GM12878 (cell line): ENCODE measurements at regions of chr9 and their contacts with region 1.

Region 1: GRCh38 chr9:38671748-38672147 is 48.2 kb downstream of the FAM240B start:
- DNase-seq: peak; percentile 50
- ATAC-seq: peak; percentile 78
- H3K4me3 ChIP-seq: no peak overlapping the region
- H3K27ac ChIP-seq: no peak overlapping the region
- H3K4me1 ChIP-seq: peaks cover 8% of the 10 kb centered on the region
- H3K27me3 ChIP-seq: no peaks in the 10 kb centered on the region
- CTCF ChIP-seq: no peak
- EP300 ChIP-seq: 0 out of 4 replicates have a peak, but pooled peaks of 1 of the 2 experiments have one; percentile 16
- POLR2A ChIP-seq: no peak
- RAD21 ChIP-seq: no peak

Region 2: GRCh38 chr9:37880916-37881479 is 790.8 kb before region 1 on chr9:
- CTCF ChIA-PET with region 1: no interaction called
- POLR2A ChIA-PET with region 1: no interaction called
- RAD21 ChIA-PET with region 1: no interaction called
- SMC1A ChIA-PET with region 1: no interaction called
- in situ Hi-C with region 1: no loop called
- intact Hi-C with region 1: no loop called
- DNase-seq: no peak
- ATAC-seq: no peak
- H3K4me3 ChIP-seq: no peak overlapping the region
- H3K27ac ChIP-seq: no peak overlapping the region
- H3K4me1 ChIP-seq: no peaks in the 10 kb centered on the region
- H3K27me3 ChIP-seq: no peaks in the 10 kb centered on the region
- CTCF ChIP-seq: no peak
- EP300 ChIP-seq: no peak
- POLR2A ChIP-seq: no peak
- RAD21 ChIP-seq: no peak

Region 3: GRCh38 chr9:38277601-38278200 is 394.0 kb before region 1 on chr9:
- CTCF ChIA-PET with region 1: no interaction called
- POLR2A ChIA-PET with region 1: no interaction called
- RAD21 ChIA-PET with region 1: no interaction called
- SMC1A ChIA-PET with region 1: no interaction called
- in situ Hi-C with region 1: no loop called
- intact Hi-C with region 1: no loop called
- DNase-seq: no peak
- ATAC-seq: no peak; the same call in 2 of the 3 replicates
- H3K4me3 ChIP-seq: no peak overlapping the region
- H3K27ac ChIP-seq: no peak overlapping the region
- H3K4me1 ChIP-seq: no peaks in the 10 kb centered on the region
- H3K27me3 ChIP-seq: peaks cover 0 to 3% of the 10 kb centered on the region in 2 experiments; a peak in 2 of 4 replicates
- CTCF ChIP-seq: no peak
- EP300 ChIP-seq: no peak
- POLR2A ChIP-seq: no peak
- RAD21 ChIP-seq: no peak

Region 4: GRCh38 chr9:38371495-38371894 is 300.3 kb before region 1 on chr9:
- CTCF ChIA-PET with region 1: interaction called, 6 read pairs
- POLR2A ChIA-PET with region 1: no interaction called
- RAD21 ChIA-PET with region 1: no interaction called
- SMC1A ChIA-PET with region 1: no interaction called
- in situ Hi-C with region 1: no loop called
- intact Hi-C with region 1: loop called (anchors 2 kb)
- DNase-seq: peak; percentile 23
- ATAC-seq: peak; percentile 96
- H3K4me3 ChIP-seq: no peak overlapping the region
- H3K27ac ChIP-seq: no peak overlapping the region
- H3K4me1 ChIP-seq: no peaks in the 10 kb centered on the region
- H3K27me3 ChIP-seq: no peaks in the 10 kb centered on the region; a peak in 4 of 4 replicates
- CTCF ChIP-seq: peak; percentile 60 to 80 (median 64); a peak in 5 of 6 replicates
- EP300 ChIP-seq: no peak
- POLR2A ChIP-seq: no peak
- RAD21 ChIP-seq: peak; percentile 77

Region 5: GRCh38 chr9:38432922-38433510 is 238.7 kb before region 1 on chr9:
- CTCF ChIA-PET with region 1: interaction called, 3 read pairs
- POLR2A ChIA-PET with region 1: no interaction called
- RAD21 ChIA-PET with region 1: no interaction called
- SMC1A ChIA-PET with region 1: no interaction called
- in situ Hi-C with region 1: no loop called
- intact Hi-C with region 1: loop called (anchors 5 kb)
- DNase-seq: no peak
- ATAC-seq: peak; percentile 72
- H3K4me3 ChIP-seq: no peak overlapping the region
- H3K27ac ChIP-seq: no peak overlapping the region
- H3K4me1 ChIP-seq: no peaks in the 10 kb centered on the region
- H3K27me3 ChIP-seq: no peaks in the 10 kb centered on the region; a peak in 1 of 4 replicates
- CTCF ChIP-seq: peak; percentile 52 to 61 (median 60)
- EP300 ChIP-seq: no peak
- POLR2A ChIP-seq: no peak
- RAD21 ChIP-seq: peak; percentile 50

Region 6: GRCh38 chr9:38641985-38642864 is 29.5 kb before region 1 on chr9:
- CTCF ChIA-PET with region 1: interaction called, 39 read pairs
- POLR2A ChIA-PET with region 1: interaction called, 3 read pairs
- RAD21 ChIA-PET with region 1: interaction called, 44 read pairs
- SMC1A ChIA-PET with region 1: interaction called, 20 read pairs
- in situ Hi-C with region 1: no loop called
- intact Hi-C with region 1: no loop called
- DNase-seq: no peak
- ATAC-seq: peak; percentile 89
- H3K4me3 ChIP-seq: no peak overlapping the region
- H3K27ac ChIP-seq: no peak overlapping the region
- H3K4me1 ChIP-seq: no peaks in the 10 kb centered on the region
- H3K27me3 ChIP-seq: no peaks in the 10 kb centered on the region
- CTCF ChIP-seq: peak; percentile 30 to 54 (median 37); a peak in 5 of 6 replicates
- EP300 ChIP-seq: no peak
- POLR2A ChIP-seq: no peak
- RAD21 ChIP-seq: peak; percentile 65

Region 7: DNA sequence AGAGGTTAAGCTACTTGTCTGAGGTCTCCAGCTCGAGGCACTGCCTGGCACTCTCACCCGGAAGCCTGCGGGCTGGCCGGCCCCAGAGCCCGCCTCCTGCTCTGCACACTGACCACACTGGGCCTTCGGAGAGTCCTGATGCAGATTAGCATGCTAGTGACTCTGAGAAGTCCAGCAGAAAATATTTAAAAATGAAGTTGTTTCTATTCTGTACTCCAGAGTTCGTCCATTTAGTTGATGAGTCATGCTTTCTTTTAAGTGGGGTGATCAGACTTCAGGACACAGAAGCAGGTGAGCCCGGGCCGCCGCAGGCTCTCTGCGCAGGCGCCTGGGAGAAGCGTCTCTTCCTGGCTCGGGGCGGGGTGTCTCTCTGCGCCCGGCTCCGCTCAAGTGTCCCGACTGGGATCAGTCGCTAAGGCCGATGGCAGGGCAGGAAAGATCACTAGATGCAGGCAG is 15.7 kb after region 1 on chr9:
- CTCF ChIA-PET with region 1: interaction called, 11 read pairs
- POLR2A ChIA-PET with region 1: interaction called, 6 read pairs
- RAD21 ChIA-PET with region 1: interaction called, 23 read pairs
- SMC1A ChIA-PET with region 1: interaction called, 18 read pairs
- in situ Hi-C with region 1: no loop called
- intact Hi-C with region 1: no loop called
- DNase-seq: no peak
- ATAC-seq: peak; percentile 35; the same call in 2 of the 3 replicates
- H3K4me3 ChIP-seq: no peak overlapping the region
- H3K27ac ChIP-seq: no peak overlapping the region
- H3K4me1 ChIP-seq: no peaks in the 10 kb centered on the region
- H3K27me3 ChIP-seq: no peaks in the 10 kb centered on the region
- CTCF ChIP-seq: no peak
- EP300 ChIP-seq: no peak
- POLR2A ChIP-seq: no peak
- RAD21 ChIP-seq: no peak

Region 8: DNA sequence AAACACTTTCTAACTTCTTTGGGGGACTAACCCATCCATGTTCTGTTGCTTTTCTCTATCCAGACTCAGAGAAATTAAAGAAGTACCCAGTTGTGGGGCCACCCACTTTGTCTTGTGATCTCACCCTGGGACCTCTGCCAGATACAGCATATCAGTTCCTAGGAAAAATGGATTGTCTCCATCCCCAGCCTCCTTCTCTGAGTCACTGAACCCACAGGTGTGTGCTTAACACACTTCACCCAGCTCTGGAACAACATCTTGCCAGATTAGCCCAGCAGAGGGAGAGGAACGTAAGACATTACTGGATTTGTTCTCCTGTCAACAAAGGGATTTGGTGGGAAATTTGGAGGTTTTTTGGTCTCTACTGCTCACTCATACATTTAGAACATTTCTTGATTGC is 28.9 kb after region 1 on chr9:
- CTCF ChIA-PET with region 1: interaction called, 5 read pairs
- POLR2A ChIA-PET with region 1: interaction called, 3 read pairs
- RAD21 ChIA-PET with region 1: interaction called, 13 read pairs
- SMC1A ChIA-PET with region 1: interaction called, 12 read pairs
- in situ Hi-C with region 1: loop called (anchors 5 kb)
- intact Hi-C with region 1: no loop called
- DNase-seq: no peak
- ATAC-seq: no peak
- H3K4me3 ChIP-seq: no peak overlapping the region
- H3K27ac ChIP-seq: no peak overlapping the region
- H3K4me1 ChIP-seq: no peaks in the 10 kb centered on the region
- H3K27me3 ChIP-seq: no peaks in the 10 kb centered on the region
- CTCF ChIP-seq: no peak
- EP300 ChIP-seq: no peak
- POLR2A ChIP-seq: no peak
- RAD21 ChIP-seq: no peak

Region 9: DNA sequence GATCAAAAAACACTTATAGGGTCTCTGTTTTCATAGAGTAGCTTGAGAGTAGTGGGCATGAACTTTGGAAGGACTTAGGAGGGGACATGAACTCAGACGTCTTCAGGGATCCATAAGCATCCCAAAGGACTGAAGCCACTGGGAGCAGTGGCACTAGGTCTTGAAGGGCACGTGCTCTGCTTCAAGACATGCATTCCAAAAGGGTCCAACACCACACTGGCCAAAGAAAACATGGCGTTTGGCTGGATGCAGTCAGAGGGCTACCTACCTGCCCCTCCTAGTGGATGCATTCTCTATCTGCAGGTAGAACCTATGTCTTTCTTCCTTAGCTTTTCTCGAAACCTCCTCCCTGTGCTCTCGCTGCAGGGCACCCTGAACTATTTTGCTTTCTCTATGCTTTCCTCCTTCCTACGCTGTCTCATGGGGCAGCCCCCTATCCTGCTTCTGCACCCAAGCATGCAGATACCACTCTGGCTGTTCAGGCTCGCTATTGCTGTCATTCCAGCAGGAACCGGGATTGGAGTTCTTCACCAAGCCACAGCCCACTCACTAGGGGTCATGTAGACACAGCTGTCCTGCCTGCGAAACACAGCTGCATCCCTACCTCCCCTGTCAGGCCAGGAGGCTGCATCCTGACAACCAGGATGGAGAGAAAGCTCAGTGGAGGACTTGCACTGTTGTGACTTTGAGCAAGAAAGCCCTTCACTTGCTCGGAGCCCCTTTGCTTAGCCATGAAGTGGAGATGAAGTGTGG is 36.3 kb after region 1 on chr9:
- CTCF ChIA-PET with region 1: interaction called, 19 read pairs
- POLR2A ChIA-PET with region 1: interaction called, 4 read pairs
- RAD21 ChIA-PET with region 1: interaction called, 16 read pairs
- SMC1A ChIA-PET with region 1: interaction called, 6 read pairs
- in situ Hi-C with region 1: loop called (anchors 5 kb)
- intact Hi-C with region 1: no loop called
- DNase-seq: no peak
- ATAC-seq: peak; percentile 75
- H3K4me3 ChIP-seq: no peak overlapping the region
- H3K27ac ChIP-seq: no peak overlapping the region
- H3K4me1 ChIP-seq: no peaks in the 10 kb centered on the region
- H3K27me3 ChIP-seq: no peaks in the 10 kb centered on the region
- CTCF ChIP-seq: peak; percentile 33 to 53 (median 37); a peak in 5 of 6 replicates
- EP300 ChIP-seq: no peak
- POLR2A ChIP-seq: no peak
- RAD21 ChIP-seq: peak; percentile 40

Region 10: DNA sequence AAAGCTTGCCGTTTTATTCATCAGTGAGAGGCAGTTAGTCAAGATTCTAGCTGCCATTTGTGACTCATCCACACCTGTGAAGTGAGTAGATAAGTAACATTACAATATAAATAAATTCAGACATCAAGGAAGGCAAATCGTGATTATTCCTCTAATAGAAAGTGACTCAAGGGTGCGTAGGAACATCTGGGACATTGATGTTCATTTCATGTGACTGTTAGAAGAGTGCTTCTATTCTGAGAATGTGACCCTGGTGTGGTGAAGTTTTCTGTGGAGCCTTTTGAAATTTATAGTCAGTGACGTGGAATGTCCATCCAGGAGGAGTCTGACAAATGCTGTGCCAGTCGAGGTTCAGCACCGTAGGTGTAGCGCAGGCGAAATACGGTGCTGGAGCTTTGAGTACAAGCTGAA is 96.6 kb after region 1 on chr9:
- CTCF ChIA-PET with region 1: no interaction called
- POLR2A ChIA-PET with region 1: no interaction called
- RAD21 ChIA-PET with region 1: no interaction called
- SMC1A ChIA-PET with region 1: no interaction called
- in situ Hi-C with region 1: no loop called
- intact Hi-C with region 1: no loop called
- DNase-seq: no peak
- ATAC-seq: no peak
- H3K4me3 ChIP-seq: no peak overlapping the region
- H3K27ac ChIP-seq: no peak overlapping the region
- H3K4me1 ChIP-seq: no peaks in the 10 kb centered on the region
- H3K27me3 ChIP-seq: no peaks in the 10 kb centered on the region
- CTCF ChIP-seq: no peak
- EP300 ChIP-seq: no peak
- POLR2A ChIP-seq: no peak
- RAD21 ChIP-seq: no peak